ENCODE measurements at regions of chr9 and their contacts with region 1.

Region 1: DNA sequence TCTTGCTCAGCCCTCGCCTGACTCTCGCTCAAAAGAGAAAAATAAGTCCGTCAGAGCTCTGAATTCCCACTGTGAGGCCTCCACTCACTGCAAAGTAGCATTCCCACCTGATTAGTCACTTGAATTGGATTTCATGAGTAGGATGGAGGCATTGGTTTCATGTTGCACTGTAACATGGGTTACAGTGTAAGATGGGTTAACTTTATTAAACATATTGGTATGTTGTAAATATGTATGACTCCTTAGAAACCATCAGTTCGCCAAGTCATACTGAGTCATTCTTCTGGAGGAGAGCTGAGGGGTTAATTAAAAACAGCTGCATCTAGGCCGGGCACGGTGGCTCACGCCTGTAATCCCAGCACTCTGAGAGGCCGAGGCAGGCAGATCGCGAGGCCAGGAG is 93.8 kb upstream of the BNC2 start:
- DNase-seq: no peak
- H3K4me3 ChIP-seq: no peak overlapping the region
- H3K27ac ChIP-seq: no peak overlapping the region
- H3K4me1 ChIP-seq: no peaks in the 10 kb centered on the region
- H3K27me3 ChIP-seq: no peaks in the 10 kb centered on the region
- CTCF ChIP-seq: no peak

Region 2: DNA sequence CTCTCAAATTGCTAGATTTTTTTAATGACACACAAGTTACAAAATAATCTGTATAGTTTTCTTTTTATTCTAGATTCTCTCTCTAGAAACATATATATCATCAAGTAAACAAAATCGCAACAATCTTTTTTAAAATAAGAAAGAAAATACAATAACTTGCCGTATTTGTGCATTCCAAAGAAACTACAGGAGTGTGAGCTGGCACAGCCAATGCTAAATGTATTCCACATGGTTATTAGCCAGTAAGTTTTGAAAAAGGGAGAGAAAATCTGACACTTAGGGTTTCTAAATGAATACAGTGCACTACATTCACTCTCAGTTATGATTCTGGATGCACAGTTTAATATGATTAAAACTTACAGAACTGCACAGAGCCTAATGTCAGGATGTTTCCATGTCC is 211.6 kb before region 1 on chr9:
- intact Hi-C with region 1: no loop called
- DNase-seq: no peak
- H3K4me3 ChIP-seq: no peak overlapping the region
- H3K27ac ChIP-seq: no peak overlapping the region
- H3K4me1 ChIP-seq: no peaks in the 10 kb centered on the region
- H3K27me3 ChIP-seq: no peaks in the 10 kb centered on the region
- CTCF ChIP-seq: no peak

Region 3: DNA sequence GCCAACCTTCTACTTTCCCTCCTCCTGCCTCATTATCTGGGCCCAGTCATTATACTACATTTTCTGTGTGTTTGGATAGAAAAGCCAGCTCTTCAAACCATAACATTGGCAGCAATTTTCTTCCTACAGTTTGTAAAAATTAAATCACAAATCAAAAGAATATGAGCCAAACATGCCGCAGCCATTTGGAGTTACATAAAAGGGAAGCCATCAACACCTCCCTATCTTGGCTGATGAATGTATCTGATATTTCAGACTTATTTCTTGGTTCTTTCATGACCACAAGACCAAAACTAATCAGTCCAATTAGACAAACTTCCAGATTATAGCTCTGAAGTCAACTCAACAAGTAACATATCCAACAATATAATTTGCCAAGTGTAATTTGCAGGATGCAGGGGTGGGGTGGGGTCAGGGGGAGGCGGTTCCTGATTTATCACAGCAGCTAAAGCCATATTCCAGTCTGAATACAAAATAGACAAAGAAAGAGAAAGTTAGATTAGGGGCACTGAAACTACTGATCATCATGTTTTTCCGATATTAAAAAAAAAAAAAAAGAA is 81.2 kb after region 1 on chr9:
- intact Hi-C with region 1: loop called (anchors 10 kb)
- DNase-seq: no peak
- H3K4me3 ChIP-seq: no peak overlapping the region
- H3K27ac ChIP-seq: no peak overlapping the region
- H3K4me1 ChIP-seq: no peaks in the 10 kb centered on the region
- H3K27me3 ChIP-seq: no peaks in the 10 kb centered on the region
- CTCF ChIP-seq: no peak

Measured in ascending aorta (tissue), 2 donors.